ENCODE measurements at regions of chr12 and their contacts with region 1.

Region 1: DNA sequence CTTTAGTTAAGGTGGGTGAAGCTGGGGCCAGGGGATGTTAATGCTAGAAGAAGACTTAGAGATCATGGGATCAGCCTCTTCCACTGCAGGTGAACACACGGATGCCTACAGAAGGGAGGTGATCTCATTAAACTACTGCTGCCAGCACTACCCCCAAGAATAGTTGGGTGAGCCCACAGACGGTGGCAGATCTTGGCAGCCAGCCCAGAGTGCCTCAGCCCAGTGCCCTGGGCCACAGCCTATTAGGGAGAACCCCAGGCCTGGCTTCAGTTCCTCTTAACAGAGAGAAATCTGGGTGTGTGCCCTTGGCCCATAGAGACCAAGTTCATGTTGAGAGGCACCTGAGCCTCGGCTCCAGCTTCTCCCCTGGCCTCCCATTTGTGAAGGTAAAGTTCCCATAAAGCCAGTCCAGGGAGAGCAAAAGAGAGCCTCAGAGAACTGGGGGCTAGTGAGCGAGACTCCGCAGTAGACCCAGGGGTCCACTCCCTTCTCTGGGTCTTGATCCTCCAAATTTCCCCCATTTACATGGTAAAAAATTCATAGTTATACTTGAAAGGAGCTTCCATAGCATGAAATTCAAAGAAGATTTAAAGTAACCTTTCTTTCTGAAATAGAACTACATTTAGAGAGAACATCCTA is 125.0 kb upstream of the CCND2 start:
- DNase-seq: peak; percentile 75
- ATAC-seq: no peak
- H3K4me3 Mint-ChIP-seq: no peak overlapping the region
- H3K27ac Mint-ChIP-seq: peak overlapping the region; percentile 94
- H3K4me1 Mint-ChIP-seq: peaks cover 87% of the 10 kb centered on the region
- H3K27me3 Mint-ChIP-seq: no peaks in the 10 kb centered on the region

Region 2: DNA sequence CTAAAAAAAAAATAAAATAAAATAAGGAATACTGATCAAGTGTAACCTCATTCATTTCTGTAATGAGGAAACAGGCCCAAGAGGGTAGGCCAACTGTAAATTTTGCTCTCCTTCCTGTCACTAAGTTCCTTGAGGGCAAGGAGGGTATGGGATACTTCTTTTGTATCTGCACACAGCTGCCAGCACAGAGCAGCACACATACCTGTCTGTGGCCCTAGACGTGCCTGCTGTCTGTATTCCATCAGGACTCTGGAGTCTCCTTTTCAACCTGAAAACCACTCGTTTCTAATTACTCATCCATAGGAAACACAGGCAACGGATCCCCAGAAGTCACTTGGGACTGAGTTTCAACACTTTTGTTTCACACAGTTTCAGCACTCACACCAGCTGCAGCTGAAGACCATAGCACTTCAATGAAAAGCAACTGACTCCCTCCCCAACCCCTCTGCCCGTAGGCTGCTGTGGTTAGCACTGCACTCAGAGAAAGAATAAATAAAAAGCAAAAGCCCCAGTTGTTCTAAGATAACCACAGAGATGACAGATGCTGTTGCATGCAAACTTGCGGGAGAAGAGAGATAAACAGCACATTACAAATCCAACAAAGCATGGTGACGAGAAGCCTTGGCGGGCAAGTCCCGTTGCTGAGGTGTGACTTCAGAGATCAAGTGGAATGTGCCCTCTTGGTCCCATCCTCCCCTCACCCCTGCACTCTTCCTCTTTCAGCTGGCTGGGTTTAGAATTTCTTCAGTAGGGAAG is 420.5 kb before region 1 on chr12:
- CTCF ChIA-PET with region 1: no interaction called
- POLR2A ChIA-PET with region 1: no interaction called
- intact Hi-C with region 1: no loop called
- DNase-seq: peak; percentile 72
- ATAC-seq: peak; percentile 87
- H3K4me3 Mint-ChIP-seq: peak overlapping the region; percentile 7
- H3K27ac Mint-ChIP-seq: peak overlapping the region; percentile 73
- H3K4me1 Mint-ChIP-seq: peaks cover 37% of the 10 kb centered on the region
- H3K27me3 Mint-ChIP-seq: no peaks in the 10 kb centered on the region

Region 3: DNA sequence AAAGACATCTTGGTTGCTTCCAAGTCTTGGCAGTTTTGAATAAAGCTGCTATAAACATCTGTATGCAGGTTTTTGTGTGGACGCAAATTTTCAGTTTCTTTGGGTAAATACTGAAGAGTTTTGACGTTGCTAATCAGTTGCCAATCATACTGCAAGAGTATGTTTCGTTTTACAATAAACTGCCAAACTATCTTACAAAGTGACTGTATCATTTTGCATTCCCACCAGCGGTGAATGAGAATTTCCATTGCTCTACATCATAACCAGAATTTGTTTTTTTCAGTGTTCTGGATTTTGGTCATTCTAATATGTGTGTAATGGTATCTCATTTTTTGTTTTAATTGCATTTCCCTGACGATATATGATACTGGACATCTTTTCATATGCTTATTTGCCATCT is 84.5 kb before region 1 on chr12:
- CTCF ChIA-PET with region 1: no interaction called
- POLR2A ChIA-PET with region 1: no interaction called
- intact Hi-C with region 1: loop called in 1 of 2 experiments (anchors 1 kb)
- DNase-seq: no peak
- ATAC-seq: peak; percentile 70
- H3K4me3 Mint-ChIP-seq: no peak overlapping the region
- H3K27ac Mint-ChIP-seq: peak overlapping the region; percentile 64
- H3K4me1 Mint-ChIP-seq: peaks cover 22% of the 10 kb centered on the region
- H3K27me3 Mint-ChIP-seq: no peaks in the 10 kb centered on the region

Region 4: DNA sequence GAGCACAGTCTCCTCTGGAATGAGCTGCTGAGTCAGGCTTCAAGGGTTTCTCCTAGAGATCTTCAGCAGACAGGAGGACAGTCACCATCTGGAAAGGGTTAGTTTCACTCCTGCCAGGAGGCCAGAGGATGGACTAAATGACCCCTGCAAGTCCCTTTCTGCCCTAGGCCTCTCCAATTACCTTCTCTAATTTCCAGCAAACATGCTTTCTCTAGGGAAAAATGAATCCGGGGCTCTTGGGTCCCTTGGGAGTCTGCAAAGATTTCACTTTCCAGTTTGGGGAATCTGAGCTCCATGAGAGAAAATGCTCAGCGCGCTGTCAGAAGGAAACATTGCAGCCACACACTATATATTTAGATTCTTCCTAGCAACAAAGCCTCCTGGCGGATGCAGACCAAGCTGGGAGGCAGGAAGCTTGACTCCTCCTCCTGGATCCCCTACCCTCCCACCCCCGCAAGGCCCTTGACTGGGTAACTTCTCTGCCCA is 59.4 kb before region 1 on chr12:
- CTCF ChIA-PET with region 1: no interaction called
- POLR2A ChIA-PET with region 1: no interaction called
- intact Hi-C with region 1: no loop called
- DNase-seq: no peak
- ATAC-seq: no peak
- H3K4me3 Mint-ChIP-seq: no peak overlapping the region
- H3K27ac Mint-ChIP-seq: no peak overlapping the region
- H3K4me1 Mint-ChIP-seq: peaks cover 12% of the 10 kb centered on the region
- H3K27me3 Mint-ChIP-seq: no peaks in the 10 kb centered on the region

Region 5: DNA sequence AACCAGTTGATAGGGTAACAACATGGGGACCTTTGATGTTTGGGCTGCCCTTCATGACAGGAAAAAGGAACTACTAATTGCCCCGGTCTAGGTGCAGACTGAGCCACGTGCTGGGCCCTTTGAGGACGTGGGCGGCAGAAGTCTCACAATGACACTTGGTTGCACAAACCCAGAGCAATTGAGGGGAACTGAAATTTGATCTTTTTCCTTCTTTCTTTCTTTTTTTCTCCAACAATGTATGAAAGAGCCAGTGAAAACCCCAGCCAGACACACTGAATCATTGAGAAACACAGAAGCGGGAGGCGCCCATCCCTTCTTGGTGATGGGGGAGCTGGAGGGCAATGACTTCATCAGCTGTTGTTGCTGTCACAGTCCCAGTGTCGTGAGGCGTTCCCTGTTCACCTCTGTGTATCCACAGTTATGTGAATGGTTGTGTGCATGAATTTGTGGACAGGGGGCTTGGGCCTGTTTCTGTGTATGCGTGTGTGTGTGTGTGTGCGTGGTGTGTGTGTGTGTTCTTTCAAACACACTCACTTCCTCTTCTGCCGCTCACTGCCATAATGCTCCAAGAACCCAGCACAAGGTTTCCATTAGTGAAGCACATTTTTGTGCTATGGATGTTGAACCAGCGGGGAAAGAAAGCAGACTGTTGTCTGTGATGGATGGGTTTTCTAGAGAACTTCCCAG is 12.5 kb before region 1 on chr12:
- CTCF ChIA-PET with region 1: interaction called, 4 read pairs
- POLR2A ChIA-PET with region 1: interaction called, 5 read pairs
- intact Hi-C with region 1: loop called in 1 of 2 experiments (anchors 1 kb)
- DNase-seq: peak; percentile 90
- ATAC-seq: peak; percentile 91
- H3K4me3 Mint-ChIP-seq: peak overlapping the region; percentile 37
- H3K27ac Mint-ChIP-seq: peak overlapping the region; percentile 94
- H3K4me1 Mint-ChIP-seq: peaks cover 60% of the 10 kb centered on the region
- H3K27me3 Mint-ChIP-seq: no peaks in the 10 kb centered on the region

Region 6: GRCh38 chr12:4178424-4179170 is 30.1 kb after region 1 on chr12:
- CTCF ChIA-PET with region 1: interaction called, 5 read pairs
- POLR2A ChIA-PET with region 1: interaction called, 10 read pairs
- intact Hi-C with region 1: loop called (anchors 1 to 2 kb)
- DNase-seq: peak; percentile 52
- ATAC-seq: peak; percentile 98
- H3K4me3 Mint-ChIP-seq: peak overlapping the region; percentile 4
- H3K27ac Mint-ChIP-seq: peak overlapping the region; percentile 66
- H3K4me1 Mint-ChIP-seq: peaks cover 21% of the 10 kb centered on the region
- H3K27me3 Mint-ChIP-seq: no peaks in the 10 kb centered on the region

Region 7: GRCh38 chr12:4269279-4269991 is 120.9 kb after region 1 on chr12:
- CTCF ChIA-PET with region 1: interaction called, 9 read pairs
- POLR2A ChIA-PET with region 1: interaction called, 22 read pairs
- intact Hi-C with region 1: loop called (anchors 1 kb)
- DNase-seq: peak; percentile 97
- ATAC-seq: peak; percentile 14
- H3K4me3 Mint-ChIP-seq: peak overlapping the region; percentile 95
- H3K27ac Mint-ChIP-seq: peak overlapping the region; percentile 100
- H3K4me1 Mint-ChIP-seq: peaks cover 23% of the 10 kb centered on the region
- H3K27me3 Mint-ChIP-seq: no peaks in the 10 kb centered on the region

Region 8: DNA sequence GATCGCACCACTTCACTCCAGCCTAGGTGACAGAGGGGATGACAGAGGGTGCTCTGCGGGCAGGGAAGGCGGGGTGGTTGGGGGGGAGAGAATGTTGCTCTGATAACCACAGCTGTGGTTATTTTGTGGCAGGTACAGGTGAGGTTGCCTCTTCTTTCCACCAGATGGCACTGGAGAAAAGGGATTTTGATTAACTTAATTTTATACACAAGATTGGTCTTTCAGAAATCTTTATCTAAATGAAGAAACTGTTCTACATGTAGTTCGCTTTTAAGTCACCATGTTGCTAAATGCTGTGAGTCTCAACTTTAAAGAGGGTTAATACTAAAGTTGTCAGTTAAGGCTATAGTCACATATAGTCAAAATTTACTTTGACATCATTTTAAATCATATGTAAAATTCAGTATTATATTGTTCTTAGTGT is 205.3 kb after region 1 on chr12:
- CTCF ChIA-PET with region 1: no interaction called
- POLR2A ChIA-PET with region 1: no interaction called
- intact Hi-C with region 1: no loop called
- DNase-seq: peak; percentile 50
- ATAC-seq: peak; percentile 61
- H3K4me3 Mint-ChIP-seq: no peak overlapping the region
- H3K27ac Mint-ChIP-seq: no peak overlapping the region
- H3K4me1 Mint-ChIP-seq: no peaks in the 10 kb centered on the region
- H3K27me3 Mint-ChIP-seq: no peaks in the 10 kb centered on the region

Region 9: DNA sequence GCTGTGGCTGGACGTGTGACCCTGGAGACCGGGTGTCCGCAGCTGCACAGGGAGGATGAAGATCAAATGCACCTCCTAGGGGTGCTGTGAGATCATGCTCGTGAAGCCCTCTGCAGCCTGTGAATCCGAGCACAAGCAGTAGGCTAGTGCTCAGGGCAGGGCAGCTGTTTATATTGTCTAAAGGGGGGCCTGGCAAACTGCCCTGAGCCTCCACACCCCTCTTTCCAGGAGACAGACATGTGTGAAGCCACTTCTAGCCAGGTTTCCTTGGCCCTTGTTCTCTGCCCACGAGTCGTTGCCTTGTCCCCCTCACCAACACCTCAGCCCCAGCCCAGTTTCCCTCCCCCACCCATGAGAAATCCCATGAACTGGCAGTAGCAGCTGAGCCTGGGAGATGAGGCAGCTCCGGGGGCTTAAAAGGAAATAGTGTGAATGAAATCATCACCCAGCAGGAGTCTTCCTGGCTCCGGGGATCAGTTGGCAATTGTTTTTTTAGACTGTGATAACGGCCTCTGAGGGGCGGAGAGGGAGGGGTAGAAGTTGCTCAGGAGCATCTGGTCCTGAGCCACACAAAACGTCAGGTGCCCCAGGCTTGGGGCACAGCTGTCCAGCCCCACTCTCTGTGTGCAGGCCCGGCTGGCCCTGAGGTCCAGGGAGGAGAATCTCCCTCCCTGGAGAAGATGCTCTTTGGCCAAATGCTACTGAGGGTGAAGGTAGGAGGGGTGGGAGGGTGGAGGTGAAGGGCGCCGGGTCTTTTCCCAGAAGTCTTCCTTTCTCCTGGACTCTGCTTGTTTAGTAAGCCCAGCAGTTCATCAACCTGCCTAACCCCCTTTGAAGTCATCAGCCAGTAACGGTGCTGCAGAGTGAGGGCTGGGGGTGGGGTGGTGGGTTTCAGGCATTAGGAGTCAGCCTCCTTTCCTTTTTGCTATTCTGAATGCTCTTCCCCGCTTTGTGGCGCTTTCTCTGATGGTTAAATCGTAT is 293.1 kb after region 1 on chr12:
- CTCF ChIA-PET with region 1: no interaction called
- POLR2A ChIA-PET with region 1: no interaction called
- intact Hi-C with region 1: no loop called
- DNase-seq: no peak
- ATAC-seq: no peak
- H3K4me3 Mint-ChIP-seq: no peak overlapping the region
- H3K27ac Mint-ChIP-seq: no peak overlapping the region
- H3K4me1 Mint-ChIP-seq: peaks cover 8% of the 10 kb centered on the region
- H3K27me3 Mint-ChIP-seq: no peaks in the 10 kb centered on the region